Heart right ventricle (tissue), 16 donors: ENCODE measurements at regions of chr16 and their contacts with region 1.

Region 1: GRCh38 chr16:89442990-89443731 is 47.2 kb downstream of the ANKRD11 start:
- DNase-seq: peak in 1 of 2 donors; percentile 48
- ATAC-seq: peak in 7 of 8 donors; percentile 10 to 56 (median 47)
- H3K4me3 ChIP-seq: no peak overlapping the region
- H3K27ac ChIP-seq: peak overlapping the region in 7 of 10 donors; percentile 1 to 55 (median 41)
- H3K4me1 ChIP-seq: peaks cover 39 to 99% (median 84%) of the 10 kb centered on the region in 9 donors
- H3K27me3 ChIP-seq: no peaks in the 10 kb centered on the region
- CTCF ChIP-seq: peak in 3 of 9 donors; percentile 7 to 22 (median 12)

Region 2: DNA sequence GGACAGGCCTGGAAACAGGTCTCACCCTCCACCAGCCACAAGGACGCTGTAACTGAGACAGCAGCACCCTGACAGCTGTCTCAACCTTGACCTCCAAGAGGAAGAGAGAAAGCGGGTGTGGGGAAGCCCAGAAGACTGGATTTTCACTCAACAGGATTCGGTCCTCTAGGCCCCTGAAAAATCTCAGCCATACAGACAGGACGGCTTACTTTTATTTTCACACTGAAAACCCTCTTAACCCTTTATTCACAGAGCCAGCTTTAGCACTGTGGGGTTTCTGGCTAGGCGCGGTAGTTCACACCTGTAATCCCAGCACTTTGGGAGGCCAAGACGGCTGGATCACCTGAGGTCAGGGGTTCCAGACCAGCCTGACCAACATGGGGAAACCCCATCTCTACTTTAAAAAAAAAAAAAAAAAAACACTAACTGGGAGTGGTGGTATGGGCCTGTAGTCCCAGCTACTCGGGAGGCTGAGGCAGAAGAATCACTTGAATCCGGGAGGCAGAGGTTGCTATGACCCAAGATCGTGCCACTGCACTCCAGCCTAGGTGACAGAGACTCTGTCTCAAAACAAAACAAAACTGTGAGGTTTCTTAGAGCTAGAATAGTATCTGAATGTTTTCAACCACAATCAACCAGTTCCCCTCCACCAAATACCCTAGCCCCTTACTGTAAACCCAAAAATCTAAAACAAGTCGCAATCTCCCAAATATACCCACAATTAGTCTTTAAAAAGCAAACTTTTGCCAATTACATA is 41.9 kb after region 1 on chr16:
- intact Hi-C with region 1: loop called in 1 of 10 experiments (anchors 5 kb)
- DNase-seq: no peak
- ATAC-seq: no peak
- H3K4me3 ChIP-seq: peak overlapping the region in 1 of 10 donors; percentile 0
- H3K27ac ChIP-seq: peak overlapping the region in 3 of 10 donors; percentile 3 to 48 (median 41)
- H3K4me1 ChIP-seq: peaks cover 33 to 90% (median 82%) of the 10 kb centered on the region in 9 donors
- H3K27me3 ChIP-seq: no peaks in the 10 kb centered on the region
- CTCF ChIP-seq: no peak